Cardiac septum (tissue), 1 donor: ENCODE measurements at regions of chr11 and their contacts with region 1.

Region 1: GRCh38 chr11:1181867-1182535 is 24.2 kb downstream of the MUC5AC start:
- DNase-seq: no peak

Region 2: DNA sequence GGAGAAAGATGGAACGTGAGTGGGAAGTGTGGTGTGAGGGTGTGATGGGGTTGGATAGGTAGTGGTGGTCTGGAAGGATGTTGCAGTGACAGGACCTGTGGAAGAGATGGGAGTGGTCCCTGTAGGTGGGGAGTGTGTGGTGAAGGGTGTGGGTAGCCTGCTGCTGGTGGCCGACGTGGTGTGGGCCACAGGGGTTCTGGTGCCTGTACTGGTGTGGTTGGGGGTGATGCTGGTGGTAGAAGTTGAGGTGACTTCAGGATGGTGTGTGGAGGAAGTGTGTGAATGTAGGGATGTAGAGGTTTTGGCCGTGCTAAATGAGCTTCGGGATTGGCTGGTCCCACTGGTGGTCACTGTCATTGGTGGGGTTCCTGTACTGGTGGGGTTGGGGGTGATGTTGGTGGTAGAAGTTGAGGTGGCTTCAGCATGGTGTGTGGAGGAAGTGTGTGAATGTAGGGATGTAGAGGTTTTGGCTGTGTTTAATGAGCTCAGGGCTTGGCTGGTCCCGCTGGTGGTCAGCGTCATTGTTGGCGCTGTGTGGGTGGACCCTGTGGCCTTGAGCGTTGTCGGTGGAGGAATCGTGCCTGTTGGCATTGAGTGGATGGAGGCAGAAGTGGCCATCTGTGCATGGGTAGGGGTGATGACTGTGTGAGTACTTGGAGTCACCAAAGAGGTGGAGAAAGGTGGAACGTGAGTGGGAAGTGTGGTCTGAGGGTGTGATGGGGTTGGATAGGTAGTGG is 164.6 kb before region 1 on chr11:
- intact Hi-C with region 1: loop called (anchors 10 kb)
- DNase-seq: no peak